Right lobe of liver (tissue), 6 donors: ENCODE measurements at regions of chr12 and their contacts with region 1.

Region 1: DNA sequence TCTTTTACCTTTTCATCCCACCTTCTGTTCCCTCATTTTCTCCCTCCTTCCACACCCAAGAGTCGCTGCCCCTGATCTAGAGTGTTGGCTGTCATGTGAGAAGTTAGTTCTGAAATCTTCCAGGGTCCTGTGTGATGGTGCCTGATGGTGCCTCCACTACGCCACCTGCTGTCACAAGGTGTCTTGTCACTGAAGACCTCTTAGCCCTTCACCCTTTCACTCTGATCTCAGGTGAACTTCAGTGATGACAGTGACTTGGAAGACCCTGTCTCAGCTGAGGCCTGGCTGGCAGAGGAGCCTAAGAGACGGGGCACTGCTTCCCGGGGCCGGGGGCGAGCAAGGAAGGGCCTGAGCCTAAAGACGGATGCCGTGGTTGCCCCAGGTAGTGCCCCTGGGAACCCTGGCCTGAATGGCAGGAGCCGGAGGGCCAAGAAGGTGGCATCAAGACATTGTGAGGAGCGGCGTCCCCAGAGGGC is 7.6 kb upstream of the PFDN5 start:
- DNase-seq: peak; percentile 63 to 78 (median 66)
- ATAC-seq: peak; percentile 81 to 87 (median 86)
- H3K4me3 ChIP-seq: no peak overlapping the region
- H3K27ac ChIP-seq: no peak overlapping the region
- H3K4me1 ChIP-seq: no peaks in the 10 kb centered on the region
- H3K27me3 ChIP-seq: no peaks in the 10 kb centered on the region
- CTCF ChIP-seq: peak; percentile 69 to 76 (median 75)
- POLR2A ChIP-seq: no peak

Region 2: DNA sequence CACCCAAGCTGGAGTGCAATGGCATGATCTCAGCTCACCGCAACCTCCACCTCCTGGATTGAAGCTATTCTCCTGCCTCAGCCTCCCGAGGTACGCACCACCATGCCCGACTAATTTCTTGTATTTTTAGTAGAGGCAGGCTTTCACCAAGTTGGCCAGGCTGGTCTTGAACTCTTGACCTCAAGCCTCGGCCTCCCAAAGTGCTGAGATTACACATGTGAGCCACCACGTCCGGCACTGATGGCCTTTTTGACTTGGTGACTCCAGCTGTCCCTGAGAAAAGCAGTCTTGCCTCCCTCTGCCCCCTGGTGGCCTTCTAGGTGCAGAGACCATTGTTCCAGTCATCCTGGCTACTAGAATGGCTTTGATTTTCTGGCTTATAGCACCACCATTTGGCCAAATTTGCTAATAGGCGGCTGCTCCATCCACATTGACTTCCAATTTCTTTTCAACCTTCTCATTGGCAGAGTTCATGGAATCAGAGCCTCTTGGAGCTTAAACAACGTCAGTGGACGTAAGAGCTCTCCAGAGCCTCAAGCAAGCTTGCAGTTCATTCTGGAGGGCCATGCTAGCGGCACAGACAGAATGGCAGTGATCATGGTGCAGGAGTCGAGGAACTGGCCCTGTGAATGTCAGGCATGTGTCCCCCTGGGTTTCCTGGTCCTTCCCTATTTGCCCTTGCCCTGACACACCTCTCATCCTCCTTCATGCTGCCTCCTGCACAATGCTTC is 306.9 kb before region 1 on chr12:
- intact Hi-C with region 1: no loop called
- DNase-seq: peak; percentile 85 to 92 (median 87)
- ATAC-seq: peak; percentile 98 to 99 (median 98)
- H3K4me3 ChIP-seq: no peak overlapping the region
- H3K27ac ChIP-seq: no peak overlapping the region
- H3K4me1 ChIP-seq: peaks cover 0 to 3% (median 0%) of the 10 kb centered on the region in 4 donors
- H3K27me3 ChIP-seq: no peaks in the 10 kb centered on the region
- CTCF ChIP-seq: peak; percentile 97 to 100 (median 99)
- POLR2A ChIP-seq: no peak

Region 3: DNA sequence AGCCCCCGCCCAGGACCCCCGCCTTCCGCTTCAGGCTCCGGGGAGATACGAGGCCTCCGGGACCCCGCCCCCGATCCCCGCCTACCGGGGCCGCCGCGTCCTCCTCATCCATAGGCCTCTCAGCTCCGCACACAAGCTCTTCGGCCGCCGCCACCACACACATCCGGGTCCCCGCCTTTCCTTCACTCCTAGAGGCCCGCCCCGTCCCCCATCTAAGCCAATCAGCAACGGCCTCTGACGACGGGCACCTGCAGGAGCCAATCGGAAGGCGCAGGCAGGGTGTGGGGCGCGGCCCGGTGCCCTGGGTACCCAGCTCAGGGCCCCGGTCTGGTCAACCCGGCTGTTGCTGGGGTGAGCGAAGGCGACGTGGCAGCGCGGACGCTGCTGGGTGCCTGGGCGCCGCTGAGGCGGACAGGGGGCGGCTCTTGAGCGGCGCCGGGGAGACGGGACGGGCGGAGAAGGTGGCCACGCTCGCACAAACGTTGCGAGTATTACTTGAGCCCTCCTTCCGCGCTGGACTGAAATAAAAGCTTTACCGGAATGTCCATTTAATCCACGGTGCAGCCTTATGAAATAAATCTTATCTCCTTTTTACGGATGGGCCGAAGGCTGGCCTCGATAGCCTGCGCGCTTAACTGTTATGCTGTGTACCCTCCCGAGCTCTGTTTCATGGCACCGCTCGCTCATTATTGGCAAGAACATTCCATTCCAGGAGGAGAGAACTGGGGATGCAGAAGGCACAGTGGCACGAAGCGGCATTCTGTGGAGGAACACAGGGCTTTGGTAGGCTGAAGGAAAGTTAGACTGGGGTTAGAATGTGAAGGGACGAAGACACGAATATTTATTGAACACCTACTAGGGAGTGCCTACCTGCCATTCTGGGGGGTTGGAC is 208.3 kb before region 1 on chr12 and contains the start of gene SPRYD3:
- intact Hi-C with region 1: loop called in 1 of 2 experiments (anchors 10 kb)
- DNase-seq: peak; percentile 96 to 97 (median 97)
- ATAC-seq: peak; percentile 98 to 100 (median 100)
- H3K4me3 ChIP-seq: peak within 1 kb of the TSS; percentile 78 to 82 (median 81)
- H3K27ac ChIP-seq: peak within 1 kb of the TSS; percentile 72 to 89 (median 73)
- H3K4me1 ChIP-seq: peaks cover 0 to 13% (median 1%) of the 10 kb centered on the region in 4 donors
- H3K27me3 ChIP-seq: no peaks in the 10 kb centered on the region
- CTCF ChIP-seq: no peak
- POLR2A ChIP-seq: peak; percentile 91
- total RNA-seq, gene SPRYD3: 12.3 to 18.2 (median 14.4) TPM

Region 4: DNA sequence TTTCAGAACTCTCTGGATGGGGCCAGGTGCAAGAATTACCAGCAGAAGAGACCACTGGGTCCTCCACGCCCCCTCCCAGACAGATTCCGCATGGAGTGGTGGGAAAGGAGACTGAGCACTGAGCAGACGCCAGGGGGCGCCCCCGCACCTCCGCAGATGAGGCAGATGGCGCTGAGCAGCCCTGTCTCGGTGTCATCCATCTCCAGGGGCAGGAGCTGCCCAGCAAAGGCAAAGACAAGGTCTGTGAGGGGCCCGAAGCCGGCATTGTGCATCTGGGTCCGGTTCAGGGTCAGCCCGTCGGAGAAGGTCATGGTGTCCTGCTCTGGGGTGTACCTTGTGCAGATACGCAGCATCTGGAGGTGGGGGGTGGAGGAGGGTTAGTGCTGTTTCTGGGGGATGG is 74.4 kb before region 1 on chr12:
- intact Hi-C with region 1: loop called (anchors 5 kb)
- DNase-seq: peak; percentile 85 to 90 (median 87)
- ATAC-seq: peak; percentile 87 to 88 (median 87)
- H3K4me3 ChIP-seq: no peak overlapping the region
- H3K27ac ChIP-seq: no peak overlapping the region
- H3K4me1 ChIP-seq: peaks cover 0 to 5% (median under 1%) of the 10 kb centered on the region in 4 donors
- H3K27me3 ChIP-seq: no peaks in the 10 kb centered on the region
- CTCF ChIP-seq: peak; percentile 89 to 95 (median 90)
- POLR2A ChIP-seq: no peak